HAP-1 (cell line): ENCODE measurements at regions of chr4 and their contacts with region 1.

Region 1: GRCh38 chr4:87465739-87466366 is 43.5 kb downstream of the NUDT9 start:
- DNase-seq: peak in 1 of 2 experiments; percentile 61
- H3K4me3 ChIP-seq: no peak overlapping the region
- H3K4me1 ChIP-seq: no peaks in the 10 kb centered on the region
- H3K27me3 ChIP-seq: no peaks in the 10 kb centered on the region

Region 2: GRCh38 chr4:87270144-87270543 is 195.7 kb before region 1 on chr4:
- in situ Hi-C with region 1: loop called (anchors 5 kb)
- DNase-seq: peak; percentile 51 to 84
- H3K4me3 ChIP-seq: no peak overlapping the region
- H3K4me1 ChIP-seq: 0 out of 2 replicates have a peak, but pooled peaks cover 3% of the 10 kb centered on the region
- H3K27me3 ChIP-seq: no peaks in the 10 kb centered on the region

Region 3: DNA sequence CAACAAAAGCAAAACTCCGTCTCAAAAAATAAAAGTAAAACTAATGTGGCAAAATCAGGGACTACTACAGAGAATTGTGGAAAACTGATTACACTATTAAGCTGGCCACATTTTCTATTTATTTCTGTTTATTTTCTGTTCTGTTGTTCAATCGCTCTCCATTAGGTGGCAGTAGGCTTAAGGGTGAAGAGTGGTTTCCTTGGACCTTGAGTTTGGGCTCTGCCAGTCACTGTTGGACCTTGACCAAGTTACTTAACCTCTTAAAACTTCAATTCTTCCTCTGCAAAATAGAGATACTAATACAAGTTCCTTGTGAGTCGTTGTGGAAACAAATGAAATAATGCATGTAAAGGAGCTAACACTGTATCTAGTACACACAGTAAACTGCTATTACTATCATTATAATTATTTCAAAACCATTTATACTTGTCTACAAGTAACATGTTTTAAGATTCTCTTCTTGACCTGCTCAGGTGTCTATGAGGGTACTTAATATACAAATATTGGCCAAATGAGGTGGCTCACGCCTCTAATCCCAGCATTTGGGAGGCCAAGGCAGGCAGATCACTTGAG is 90.0 kb before region 1 on chr4:
- in situ Hi-C with region 1: loop called (anchors 10 kb)
- DNase-seq: peak in 1 of 2 experiments; percentile 60
- H3K4me3 ChIP-seq: no peak overlapping the region
- H3K4me1 ChIP-seq: no peaks in the 10 kb centered on the region
- H3K27me3 ChIP-seq: no peaks in the 10 kb centered on the region

Region 4: GRCh38 chr4:87530868-87531267 is 65.0 kb after region 1 on chr4:
- in situ Hi-C with region 1: no loop called
- DNase-seq: no peak
- H3K4me3 ChIP-seq: no peak overlapping the region
- H3K4me1 ChIP-seq: peaks cover 56% of the 10 kb centered on the region
- H3K27me3 ChIP-seq: no peaks in the 10 kb centered on the region

Region 5: GRCh38 chr4:87651941-87652340 is 186.1 kb after region 1 on chr4:
- in situ Hi-C with region 1: no loop called
- DNase-seq: no peak
- H3K4me3 ChIP-seq: no peak overlapping the region
- H3K4me1 ChIP-seq: no peaks in the 10 kb centered on the region
- H3K27me3 ChIP-seq: peaks cover 12% of the 10 kb centered on the region